ENCODE measurements at regions of chr5 and their contacts with region 1.

Region 1: DNA sequence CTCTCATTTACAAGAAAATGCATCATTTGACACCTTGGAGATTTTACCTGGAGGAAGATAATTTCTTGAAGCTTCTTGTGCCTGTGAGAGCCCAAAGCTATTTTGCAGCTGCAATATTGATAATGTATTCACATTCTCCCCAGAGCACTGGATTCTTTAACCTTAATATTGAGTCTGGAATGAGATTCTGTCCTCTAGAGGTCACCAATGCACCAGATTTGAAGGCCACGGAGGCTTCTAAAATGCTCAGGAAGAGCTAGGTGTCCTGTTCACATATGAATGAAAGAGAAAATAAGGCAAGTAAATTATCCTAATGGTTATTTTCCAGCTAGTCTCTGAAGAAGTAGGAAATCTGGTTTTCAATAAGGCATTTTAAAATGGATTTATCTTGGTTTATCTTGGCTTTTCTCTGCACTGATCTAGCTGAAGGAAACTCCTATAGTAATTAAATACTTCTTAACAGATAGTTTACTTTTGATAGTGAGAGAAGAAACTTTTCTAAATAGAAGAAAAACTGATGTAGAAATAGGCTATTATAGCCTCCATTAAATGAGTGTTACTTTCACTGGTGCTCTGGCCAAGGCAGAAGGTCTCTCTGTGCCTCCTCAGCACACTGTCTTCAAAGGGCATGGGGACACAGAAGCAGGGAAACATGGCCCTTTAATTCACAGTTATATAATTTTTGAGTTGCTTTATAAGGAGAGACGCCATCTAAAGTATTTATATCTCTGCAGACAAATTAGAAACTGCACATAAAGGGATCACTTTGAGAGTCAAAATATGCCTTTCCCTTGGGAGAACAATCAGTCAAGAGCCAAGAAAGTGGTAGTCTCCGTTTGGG is 297.0 kb upstream of the ACTBL2 start:
- H3K4me3 ChIP-seq: no peak overlapping the region
- H3K27ac ChIP-seq: no peak overlapping the region
- H3K4me1 ChIP-seq: peaks cover 24% of the 10 kb centered on the region
- CTCF ChIP-seq: peak; percentile 27; the same call in 1 of the 2 replicates

Region 2: DNA sequence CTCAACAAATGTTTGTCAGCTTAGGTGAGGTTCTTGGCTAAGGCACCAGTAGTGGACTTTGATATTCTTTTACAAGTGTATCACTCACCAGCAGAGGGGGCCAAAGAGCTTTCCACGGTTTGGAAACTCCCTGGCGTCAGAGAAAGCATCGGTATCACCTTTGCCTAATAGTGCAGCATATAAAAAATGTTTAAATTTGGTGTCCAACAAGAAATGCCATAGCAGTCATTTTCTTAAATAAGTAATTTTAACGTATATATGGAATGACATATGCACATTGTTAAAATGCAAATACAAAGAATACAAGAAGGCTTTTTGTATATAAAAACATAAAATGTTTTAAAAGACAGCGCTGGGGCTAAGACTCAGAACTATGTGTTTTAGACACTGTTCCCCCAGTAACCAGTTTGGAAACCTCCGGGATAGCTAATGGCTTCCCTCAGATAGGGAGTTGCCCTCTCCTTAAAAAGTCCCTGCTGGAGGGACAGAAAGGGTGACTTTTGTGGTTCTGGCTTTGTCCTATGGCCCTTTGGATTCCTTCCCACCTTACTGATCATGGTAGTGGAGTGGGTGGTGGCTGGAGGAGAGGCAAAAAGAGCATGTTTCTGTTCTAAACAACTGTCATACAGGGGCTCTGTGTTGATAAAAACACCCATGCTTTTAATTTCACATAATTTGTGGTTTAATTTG is 481.2 kb before region 1 on chr5:
- CTCF ChIA-PET with region 1: interaction called, 35 read pairs
- POLR2A ChIA-PET with region 1: no interaction called
- H3K4me3 ChIP-seq: no peak overlapping the region
- H3K27ac ChIP-seq: no peak overlapping the region
- H3K4me1 ChIP-seq: no peaks in the 10 kb centered on the region; the same call in none of the 2 replicates
- CTCF ChIP-seq: peak; percentile 54; the same call in 1 of the 2 replicates

Region 3: DNA sequence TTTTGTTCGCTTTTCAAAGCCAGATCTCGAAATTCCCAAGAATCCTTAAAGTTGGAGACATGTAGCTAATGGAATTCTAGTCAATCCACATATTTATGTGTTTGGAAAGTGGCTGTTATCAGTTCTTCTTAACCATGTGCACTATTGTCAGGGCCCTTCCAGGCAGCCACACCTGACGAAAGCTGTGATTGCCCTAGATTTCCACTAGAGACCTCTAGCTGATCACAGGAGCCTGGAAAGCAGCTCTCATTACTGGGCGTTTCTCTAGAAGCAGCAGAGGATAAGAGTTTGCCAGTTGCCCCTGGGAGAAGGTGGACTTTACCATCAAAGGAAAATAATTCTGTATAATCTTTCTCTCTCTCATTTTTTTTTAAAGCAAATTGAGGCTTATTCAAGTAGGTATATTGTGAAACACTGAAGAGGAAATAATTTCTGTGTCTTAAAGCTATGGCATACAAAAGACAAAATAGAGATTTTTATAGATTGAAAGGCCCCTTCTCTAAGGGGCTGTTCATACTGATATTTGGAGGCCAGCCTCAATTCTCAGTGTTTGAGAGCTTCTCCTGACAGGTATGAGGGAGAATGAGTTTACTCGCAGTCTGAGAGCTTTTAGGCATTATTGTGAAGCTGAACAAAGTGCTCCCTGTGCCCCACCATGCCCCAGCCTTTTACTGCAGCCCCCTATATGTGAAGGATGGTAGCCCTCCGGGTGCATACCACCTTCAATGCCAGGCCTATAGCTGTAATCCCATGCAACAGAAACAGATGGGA is 108.4 kb after region 1 on chr5:
- CTCF ChIA-PET with region 1: interaction called, 35 read pairs
- POLR2A ChIA-PET with region 1: no interaction called
- H3K4me3 ChIP-seq: no peak overlapping the region
- H3K27ac ChIP-seq: no peak overlapping the region
- H3K4me1 ChIP-seq: no peaks in the 10 kb centered on the region
- CTCF ChIP-seq: peak; percentile 30; the same call in 1 of the 2 replicates

Region 4: GRCh38 chr5:58002318-58002717 is 222.7 kb after region 1 on chr5:
- CTCF ChIA-PET with region 1: no interaction called
- POLR2A ChIA-PET with region 1: no interaction called
- H3K4me3 ChIP-seq: no peak overlapping the region
- H3K27ac ChIP-seq: no peak overlapping the region
- H3K4me1 ChIP-seq: no peaks in the 10 kb centered on the region
- CTCF ChIP-seq: no peak

Region 5: GRCh38 chr5:58460732-58461286 is 681.2 kb after region 1 on chr5:
- CTCF ChIA-PET with region 1: interaction called, 67 read pairs
- POLR2A ChIA-PET with region 1: interaction called, 18 read pairs
- H3K4me3 ChIP-seq: peak overlapping the region; percentile 98
- H3K27ac ChIP-seq: peak overlapping the region; percentile 98
- H3K4me1 ChIP-seq: no peaks in the 10 kb centered on the region
- CTCF ChIP-seq: peak; percentile 81